GM12878 (cell line): ENCODE measurements at regions of chr19 and their contacts with region 1.

Region 1: DNA sequence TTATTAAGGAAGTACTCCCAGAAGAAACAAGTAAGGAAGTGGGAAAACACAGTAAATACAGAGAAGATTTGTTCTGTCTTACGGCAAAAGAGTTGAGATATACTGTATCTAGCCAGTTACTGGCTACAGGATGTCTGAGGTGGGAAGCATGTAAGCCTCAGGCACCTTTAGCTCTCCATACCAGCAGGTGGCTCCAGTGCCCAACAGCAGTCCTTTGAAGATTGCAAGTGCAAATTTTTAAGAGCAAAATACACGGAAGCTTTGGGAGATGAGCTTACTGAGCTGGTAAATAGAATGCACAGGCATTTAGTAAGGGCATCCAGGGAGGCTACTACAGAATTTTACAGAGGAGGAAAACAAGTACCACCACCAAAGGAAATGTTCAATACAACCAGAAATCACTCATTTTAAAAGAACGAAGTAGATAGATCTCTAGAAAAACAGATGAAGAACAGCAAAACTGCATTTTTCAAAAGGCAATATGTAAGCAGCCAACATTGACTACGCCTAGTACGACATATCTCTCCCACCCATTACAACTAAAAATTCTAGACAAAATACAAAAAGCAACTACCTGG is 57.9 kb upstream of the VSTM2B start:
- DNase-seq: no peak
- ATAC-seq: peak; percentile 59
- H3K4me3 ChIP-seq: no peak overlapping the region
- H3K27ac ChIP-seq: no peak overlapping the region
- H3K4me1 ChIP-seq: no peaks in the 10 kb centered on the region
- H3K27me3 ChIP-seq: no peaks in the 10 kb centered on the region
- CTCF ChIP-seq: peak; percentile 34 to 43 (median 36); a peak in 4 of 6 replicates
- EP300 ChIP-seq: no peak
- POLR2A ChIP-seq: no peak
- RAD21 ChIP-seq: peak; percentile 48

Region 2: GRCh38 chr19:29483944-29484581 is 16.1 kb after region 1 on chr19:
- CTCF ChIA-PET with region 1: no interaction called
- POLR2A ChIA-PET with region 1: no interaction called
- RAD21 ChIA-PET with region 1: no interaction called
- SMC1A ChIA-PET with region 1: no interaction called
- in situ Hi-C with region 1: no loop called
- intact Hi-C with region 1: no loop called
- DNase-seq: no peak
- ATAC-seq: no peak
- H3K4me3 ChIP-seq: no peak overlapping the region
- H3K27ac ChIP-seq: no peak overlapping the region
- H3K4me1 ChIP-seq: no peaks in the 10 kb centered on the region
- H3K27me3 ChIP-seq: no peaks in the 10 kb centered on the region
- CTCF ChIP-seq: no peak
- EP300 ChIP-seq: no peak
- POLR2A ChIP-seq: no peak
- RAD21 ChIP-seq: no peak

Region 3: DNA sequence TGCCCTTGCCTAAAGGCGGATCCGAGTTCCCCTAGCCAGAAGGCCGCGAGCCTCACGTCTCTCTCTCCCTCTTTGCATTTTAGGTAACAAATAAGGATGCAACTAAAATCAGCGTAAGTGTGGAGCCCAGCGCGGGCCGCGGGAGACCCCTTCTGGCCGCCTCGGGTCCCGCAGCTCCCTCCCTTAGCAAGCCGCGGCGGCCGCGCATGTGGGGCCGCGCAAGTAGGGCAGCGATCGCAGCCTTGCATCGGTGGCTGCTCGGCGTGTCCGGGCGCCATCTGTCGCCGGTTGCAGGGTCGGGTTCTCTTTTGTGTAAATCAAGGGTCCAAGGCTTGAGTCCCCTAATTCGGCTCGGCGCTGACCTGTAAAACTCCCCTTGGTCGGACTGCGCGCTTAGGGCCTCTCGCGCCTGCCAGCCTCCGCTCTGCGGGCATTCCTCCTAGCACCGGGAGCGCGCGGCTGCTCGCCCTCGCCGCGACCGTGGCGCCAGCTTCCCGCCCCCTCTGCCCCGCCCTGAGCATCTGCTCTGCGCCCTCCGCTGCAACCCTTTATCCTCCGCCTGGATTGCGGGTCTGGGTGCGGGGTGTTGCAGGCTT is 60.5 kb after region 1 on chr19:
- CTCF ChIA-PET with region 1: no interaction called
- POLR2A ChIA-PET with region 1: no interaction called
- RAD21 ChIA-PET with region 1: no interaction called
- SMC1A ChIA-PET with region 1: no interaction called
- in situ Hi-C with region 1: no loop called
- intact Hi-C with region 1: loop called (anchors 5 kb)
- DNase-seq: peak; percentile 3
- ATAC-seq: peak; percentile 96
- H3K4me3 ChIP-seq: no peak overlapping the region
- H3K27ac ChIP-seq: no peak overlapping the region
- H3K4me1 ChIP-seq: no peaks in the 10 kb centered on the region
- H3K27me3 ChIP-seq: peaks cover 9 to 22% of the 10 kb centered on the region in 2 experiments
- CTCF ChIP-seq: peak; percentile 63 to 72 (median 66); a peak in 5 of 6 replicates
- EP300 ChIP-seq: no peak
- POLR2A ChIP-seq: no peak
- RAD21 ChIP-seq: peak; percentile 51

Region 4: GRCh38 chr19:29560313-29561075 is 92.6 kb after region 1 on chr19:
- CTCF ChIA-PET with region 1: no interaction called
- POLR2A ChIA-PET with region 1: no interaction called
- RAD21 ChIA-PET with region 1: no interaction called
- SMC1A ChIA-PET with region 1: no interaction called
- in situ Hi-C with region 1: no loop called
- intact Hi-C with region 1: no loop called
- DNase-seq: no peak
- ATAC-seq: no peak
- H3K4me3 ChIP-seq: no peak overlapping the region
- H3K27ac ChIP-seq: no peak overlapping the region
- H3K4me1 ChIP-seq: no peaks in the 10 kb centered on the region
- H3K27me3 ChIP-seq: no peaks in the 10 kb centered on the region
- CTCF ChIP-seq: no peak
- EP300 ChIP-seq: no peak
- POLR2A ChIP-seq: no peak
- RAD21 ChIP-seq: no peak